PC-3 (cell line): ENCODE measurements at regions of chr6 and their contacts with region 1.

Region 1: GRCh38 chr6:125858427-125859320 is 67.9 kb downstream of the NCOA7 start:
- DNase-seq: peak; percentile 85
- ATAC-seq: peak; percentile 99
- H3K4me3 ChIP-seq: no peak overlapping the region
- H3K27ac ChIP-seq: no peak overlapping the region
- H3K4me1 ChIP-seq: no peaks in the 10 kb centered on the region
- H3K27me3 ChIP-seq: no peaks in the 10 kb centered on the region
- CTCF ChIP-seq: peak; percentile 89

Region 2: DNA sequence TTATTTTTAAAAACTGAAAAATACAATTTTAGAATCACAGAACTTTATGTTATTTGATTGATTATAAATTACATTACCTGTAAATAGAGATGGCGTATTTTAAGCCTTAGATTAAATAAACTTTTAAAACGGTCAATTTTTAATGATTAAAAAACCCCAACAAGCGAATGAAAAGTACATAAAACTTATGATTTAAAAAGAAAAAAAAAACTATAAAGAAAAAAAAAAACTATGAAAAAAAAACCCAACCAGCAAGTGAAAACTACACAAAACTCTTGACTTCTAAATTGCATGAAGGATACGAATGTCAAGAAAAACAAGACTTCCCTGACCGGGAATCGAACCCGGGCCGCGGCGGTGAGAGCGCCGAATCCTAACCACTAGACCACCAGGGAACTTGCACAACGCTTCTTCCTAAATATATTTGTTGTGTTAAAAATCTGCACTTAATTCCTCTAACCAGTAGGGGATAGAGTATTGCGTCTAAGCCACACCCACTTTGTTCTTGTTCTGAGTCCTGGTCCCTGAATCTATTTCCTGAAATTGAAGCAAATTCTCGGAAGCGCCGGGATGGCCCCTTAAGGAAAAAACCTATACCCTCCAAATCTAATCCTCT is 78.6 kb before region 1 on chr6:
- CTCF ChIA-PET with region 1: no interaction called
- POLR2A ChIA-PET with region 1: no interaction called
- intact Hi-C with region 1: loop called (anchors 2 kb)
- DNase-seq: peak; percentile 94
- ATAC-seq: peak; percentile 68
- H3K4me3 ChIP-seq: peak overlapping the region; percentile 94
- H3K27ac ChIP-seq: peak overlapping the region; percentile 54
- H3K4me1 ChIP-seq: peaks cover 15% of the 10 kb centered on the region
- H3K27me3 ChIP-seq: peaks cover 4% of the 10 kb centered on the region; the same call in 1 of the 2 replicates
- CTCF ChIP-seq: no peak

Region 3: GRCh38 chr6:125790358-125791150 is 68.1 kb before region 1 on chr6 and contains the start of gene NCOA7:
- CTCF ChIA-PET with region 1: interaction called, 3 read pairs
- POLR2A ChIA-PET with region 1: no interaction called
- intact Hi-C with region 1: loop called (anchors 2 kb)
- DNase-seq: peak; percentile 58
- ATAC-seq: peak; percentile 80
- H3K4me3 ChIP-seq: peak within 1 kb of the TSS; percentile 91
- H3K27ac ChIP-seq: 0 out of 2 replicates have a peak within 1 kb of the TSS, but pooled peaks have one; percentile 7
- H3K4me1 ChIP-seq: peaks cover 45% of the 10 kb centered on the region
- H3K27me3 ChIP-seq: no peaks in the 10 kb centered on the region
- CTCF ChIP-seq: no peak
- total RNA-seq, gene NCOA7: 12.1 and 13.4 TPM in 2 replicates